CD8-positive, alpha-beta T cell (primary cell): ENCODE measurements at regions of chr17 and their contacts with region 1.

Region 1: GRCh38 chr17:32319548-32319905 is 22.4 kb downstream of the C17orf75 start:
- DNase-seq: peak; percentile 48 to 82 (median 74)
- ATAC-seq: peak; percentile 92
- H3K4me3 ChIP-seq: peak overlapping the region; percentile 20 to 46
- H3K4me3 Mint-ChIP-seq: peak overlapping the region; percentile 72
- H3K27ac ChIP-seq: no peak overlapping the region
- H3K27ac Mint-ChIP-seq: no peak overlapping the region
- H3K4me1 ChIP-seq: peaks cover 12% of the 10 kb centered on the region
- H3K4me1 Mint-ChIP-seq: peaks cover 15% of the 10 kb centered on the region
- H3K27me3 ChIP-seq: no peaks in the 10 kb centered on the region
- H3K27me3 Mint-ChIP-seq: peaks cover 16% of the 10 kb centered on the region
- CTCF ChIP-seq: peak; percentile 86

Region 2: GRCh38 chr17:32206861-32207260 is 112.7 kb before region 1 on chr17:
- CTCF ChIA-PET with region 1: no interaction called
- POLR2A ChIA-PET with region 1: no interaction called
- intact Hi-C with region 1: loop called (anchors 1 to 2 kb)
- DNase-seq: no peak
- ATAC-seq: no peak
- H3K4me3 ChIP-seq: no peak overlapping the region
- H3K4me3 Mint-ChIP-seq: no peak overlapping the region
- H3K27ac ChIP-seq: no peak overlapping the region
- H3K27ac Mint-ChIP-seq: no peak overlapping the region
- H3K4me1 ChIP-seq: no peaks in the 10 kb centered on the region
- H3K4me1 Mint-ChIP-seq: no peaks in the 10 kb centered on the region
- H3K27me3 ChIP-seq: no peaks in the 10 kb centered on the region
- H3K27me3 Mint-ChIP-seq: no peaks in the 10 kb centered on the region
- CTCF ChIP-seq: no peak

Region 3: GRCh38 chr17:32253117-32253611 is 66.4 kb before region 1 on chr17:
- CTCF ChIA-PET with region 1: interaction called, 6 read pairs
- POLR2A ChIA-PET with region 1: no interaction called
- intact Hi-C with region 1: loop called (anchors 1 kb)
- DNase-seq: peak; percentile 24 to 75 (median 60)
- ATAC-seq: peak; percentile 94
- H3K4me3 ChIP-seq: no peak overlapping the region
- H3K4me3 Mint-ChIP-seq: no peak overlapping the region
- H3K27ac ChIP-seq: no peak overlapping the region
- H3K27ac Mint-ChIP-seq: no peak overlapping the region
- H3K4me1 ChIP-seq: no peaks in the 10 kb centered on the region
- H3K4me1 Mint-ChIP-seq: no peaks in the 10 kb centered on the region
- H3K27me3 ChIP-seq: no peaks in the 10 kb centered on the region
- H3K27me3 Mint-ChIP-seq: peaks cover 4% of the 10 kb centered on the region
- CTCF ChIP-seq: peak; percentile 65

Region 4: GRCh38 chr17:32341857-32342602 is 22.5 kb after region 1 on chr17 and contains the start of gene C17orf75:
- CTCF ChIA-PET with region 1: interaction called, 10 read pairs
- POLR2A ChIA-PET with region 1: interaction called, 4 read pairs
- intact Hi-C with region 1: no loop called
- DNase-seq: peak; percentile 64 to 89 (median 79)
- ATAC-seq: peak; percentile 90
- H3K4me3 ChIP-seq: peak within 1 kb of the TSS; percentile 48 to 76
- H3K4me3 Mint-ChIP-seq: peak within 1 kb of the TSS; percentile 92
- H3K27ac ChIP-seq: peak within 1 kb of the TSS; percentile 49 to 84
- H3K27ac Mint-ChIP-seq: peak within 1 kb of the TSS; percentile 92
- H3K4me1 ChIP-seq: peaks cover 21% of the 10 kb centered on the region
- H3K4me1 Mint-ChIP-seq: peaks cover 24% of the 10 kb centered on the region
- H3K27me3 ChIP-seq: no peaks in the 10 kb centered on the region
- H3K27me3 Mint-ChIP-seq: no peaks in the 10 kb centered on the region
- CTCF ChIP-seq: no peak
- total RNA-seq, gene C17orf75: 12.5 to 14.0 TPM